ENCODE measurements at regions of chr15 and their contacts with region 1.

Region 1: DNA sequence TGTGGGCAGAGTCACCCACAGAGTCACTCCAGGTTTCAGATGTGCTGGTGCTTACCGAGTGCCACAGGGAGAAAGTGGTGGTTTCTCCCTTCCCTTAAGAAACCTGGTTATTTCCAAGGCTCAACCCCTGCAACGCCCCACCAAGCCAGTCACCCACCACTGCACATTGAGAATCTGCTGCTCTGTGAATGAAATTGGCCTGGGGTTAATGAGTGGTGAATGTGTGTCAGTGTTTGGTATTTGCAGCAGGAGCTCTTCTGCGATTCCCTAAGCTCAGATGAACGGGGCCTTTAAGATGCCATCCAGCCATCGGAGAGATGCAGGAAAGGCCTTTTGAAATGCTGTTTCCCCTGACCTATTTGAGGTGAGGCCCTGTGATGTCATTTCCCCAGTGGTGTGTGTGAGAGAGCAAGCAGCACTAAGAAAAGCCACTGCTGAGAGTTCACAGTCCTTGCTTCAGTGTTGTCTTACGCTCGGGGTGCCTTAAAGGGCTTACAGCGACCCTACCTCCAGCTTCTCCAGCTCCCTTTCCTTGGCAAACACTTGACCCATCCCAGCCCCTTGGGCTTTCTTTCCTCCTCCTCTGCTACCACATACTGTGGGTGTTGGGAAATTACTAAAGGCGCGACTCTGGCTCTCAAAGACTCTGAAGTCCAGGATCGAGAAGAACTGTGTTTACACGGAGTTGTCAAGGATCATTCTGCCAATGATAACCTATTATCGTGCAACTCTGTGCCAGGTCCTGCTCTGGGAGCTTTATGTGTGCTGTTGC is 68.9 kb downstream of the SMAD3 start:
- DNase-seq: peak in 2 of 3 donors; percentile 23 to 49
- H3K4me3 ChIP-seq: no peak overlapping the region
- H3K4me3 Mint-ChIP-seq: peak overlapping the region in 1 of 2 donors; percentile 66
- H3K27ac ChIP-seq: peak overlapping the region in 1 of 2 donors; percentile 50
- H3K27ac Mint-ChIP-seq: peak overlapping the region; percentile 42 to 93 (median 68)
- H3K4me1 ChIP-seq: peaks cover 10 to 25% of the 10 kb centered on the region in 2 donors
- H3K4me1 Mint-ChIP-seq: peaks cover 50% of the 10 kb centered on the region
- H3K27me3 ChIP-seq: no peaks in the 10 kb centered on the region
- H3K27me3 Mint-ChIP-seq: peaks cover 0 to 2% (median 0%) of the 10 kb centered on the region in 3 donors
- CTCF ChIP-seq: no peak

Region 2: GRCh38 chr15:67165254-67166253 is 31.3 kb after region 1 on chr15:
- intact Hi-C with region 1: loop called in 1 of 2 experiments (anchors 5 kb)
- DNase-seq: no peak
- H3K4me3 ChIP-seq: no peak overlapping the region
- H3K4me3 Mint-ChIP-seq: no peak overlapping the region
- H3K27ac ChIP-seq: peak overlapping the region in 1 of 2 donors; percentile 39
- H3K27ac Mint-ChIP-seq: peak overlapping the region in 3 of 7 donors; percentile 15 to 83 (median 63)
- H3K4me1 ChIP-seq: peaks cover 13 to 19% of the 10 kb centered on the region in 2 donors
- H3K4me1 Mint-ChIP-seq: peaks cover 22% of the 10 kb centered on the region
- H3K27me3 ChIP-seq: no peaks in the 10 kb centered on the region
- H3K27me3 Mint-ChIP-seq: peaks cover 0 to 2% (median 0%) of the 10 kb centered on the region in 3 donors
- CTCF ChIP-seq: no peak

Region 3: DNA sequence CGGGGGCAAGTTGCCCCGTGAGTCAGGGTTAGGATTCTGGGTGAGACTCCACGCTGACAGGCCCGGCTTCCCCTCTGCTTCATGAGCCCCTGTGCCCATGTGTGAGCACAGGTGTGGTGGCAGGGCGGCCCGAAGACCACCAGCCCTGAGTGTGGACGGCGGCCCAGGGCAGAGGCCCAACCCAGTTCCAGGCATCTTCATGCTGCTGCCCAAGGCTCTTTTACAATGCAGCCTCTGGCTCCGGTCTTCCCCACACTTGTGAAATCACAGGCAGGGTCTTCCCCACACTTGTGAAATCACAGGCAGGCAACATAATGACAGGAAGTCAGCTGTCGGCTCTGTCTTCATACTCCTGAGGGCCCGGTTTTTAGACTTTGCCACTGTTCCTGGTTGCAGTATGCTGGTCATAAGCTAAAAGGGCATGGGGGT is 41.4 kb after region 1 on chr15:
- intact Hi-C with region 1: no loop called
- DNase-seq: peak; percentile 93 to 97 (median 95)
- H3K4me3 ChIP-seq: peak overlapping the region in 1 of 3 experiments; percentile 38
- H3K4me3 Mint-ChIP-seq: peak overlapping the region; percentile 56 to 74
- H3K27ac ChIP-seq: peak overlapping the region; percentile 87 to 94
- H3K27ac Mint-ChIP-seq: peak overlapping the region; percentile 96 to 99 (median 97)
- H3K4me1 ChIP-seq: peaks cover 42 to 44% of the 10 kb centered on the region in 2 donors
- H3K4me1 Mint-ChIP-seq: peaks cover 50% of the 10 kb centered on the region
- H3K27me3 ChIP-seq: no peaks in the 10 kb centered on the region
- H3K27me3 Mint-ChIP-seq: peaks cover 0 to 3% (median 2%) of the 10 kb centered on the region in 3 donors
- CTCF ChIP-seq: no peak

Region 4: GRCh38 chr15:68085052-68085451 is 950.8 kb after region 1 on chr15:
- intact Hi-C with region 1: no loop called
- DNase-seq: no peak
- H3K4me3 ChIP-seq: no peak overlapping the region
- H3K4me3 Mint-ChIP-seq: no peak overlapping the region
- H3K27ac ChIP-seq: no peak overlapping the region
- H3K27ac Mint-ChIP-seq: no peak overlapping the region
- H3K4me1 ChIP-seq: peaks cover 10 to 22% of the 10 kb centered on the region in 2 donors
- H3K4me1 Mint-ChIP-seq: peaks cover 36% of the 10 kb centered on the region
- H3K27me3 ChIP-seq: no peaks in the 10 kb centered on the region
- H3K27me3 Mint-ChIP-seq: no peaks in the 10 kb centered on the region
- CTCF ChIP-seq: no peak